Esophagus muscularis mucosa (tissue), 4 donors: ENCODE measurements at regions of chr1 and their contacts with region 1.

Region 1: GRCh38 chr1:91165033-91165654 is 143.3 kb upstream of the ZNF644 start:
- DNase-seq: peak; percentile 93
- H3K4me3 ChIP-seq: no peak overlapping the region
- H3K27ac ChIP-seq: no peak overlapping the region
- H3K4me1 ChIP-seq: peaks cover 0 to 4% (median 2%) of the 10 kb centered on the region in 4 donors
- H3K27me3 ChIP-seq: no peaks in the 10 kb centered on the region
- CTCF ChIP-seq: peak; percentile 81 to 94 (median 90)
- EP300 ChIP-seq: no peak
- POLR2A ChIP-seq: no peak

Region 2: GRCh38 chr1:90579212-90579802 is 585.8 kb before region 1 on chr1:
- intact Hi-C with region 1: loop called (anchors 2 kb)
- DNase-seq: no peak
- H3K4me3 ChIP-seq: no peak overlapping the region
- H3K27ac ChIP-seq: no peak overlapping the region
- H3K4me1 ChIP-seq: no peaks in the 10 kb centered on the region
- H3K27me3 ChIP-seq: peaks cover 0 to 15% (median 0%) of the 10 kb centered on the region in 4 donors
- CTCF ChIP-seq: peak; percentile 36 to 69 (median 59)
- EP300 ChIP-seq: no peak
- POLR2A ChIP-seq: no peak

Region 3: DNA sequence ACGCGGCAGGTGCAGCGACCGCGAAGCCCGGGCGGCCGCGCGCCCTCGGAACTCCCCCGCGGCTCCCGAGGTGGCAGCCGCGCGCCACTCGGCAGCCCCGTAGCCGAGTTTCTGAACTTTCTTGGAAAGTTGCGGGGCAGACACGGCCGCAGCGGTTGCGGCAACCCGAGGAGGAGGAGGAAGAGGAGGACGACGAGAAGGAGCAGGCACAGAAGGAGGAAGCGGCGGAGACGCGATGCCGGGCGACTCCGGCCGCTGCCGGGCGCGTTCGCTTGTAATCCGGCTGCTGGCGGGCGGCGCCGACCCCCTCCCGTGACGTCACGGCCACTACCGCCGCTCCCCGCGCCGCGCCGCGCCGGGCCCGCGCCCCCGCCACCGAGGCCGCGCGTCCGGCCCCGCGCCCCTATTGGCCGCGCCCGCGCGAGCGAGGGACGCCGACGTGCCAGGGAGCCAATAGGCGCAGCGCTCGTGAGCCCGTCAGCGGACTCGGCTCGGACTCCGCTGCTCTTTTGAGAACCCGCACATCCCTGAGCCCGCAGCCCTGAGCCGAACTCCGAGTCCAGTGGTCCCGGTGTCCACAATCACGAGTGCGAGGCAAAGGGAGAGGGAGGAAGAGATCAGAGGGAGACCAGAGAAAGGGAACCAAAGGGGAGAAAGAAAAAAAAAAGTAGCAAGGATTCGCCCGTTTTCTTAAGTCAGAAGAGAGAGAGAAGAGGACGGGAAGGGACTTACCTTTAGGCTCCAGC is 447.3 kb before region 1 on chr1:
- intact Hi-C with region 1: loop called (anchors 10 kb)
- DNase-seq: peak; percentile 78
- H3K4me3 ChIP-seq: peak overlapping the region; percentile 41 to 48 (median 45)
- H3K27ac ChIP-seq: no peak overlapping the region
- H3K4me1 ChIP-seq: peaks cover 26 to 56% (median 41%) of the 10 kb centered on the region in 4 donors
- H3K27me3 ChIP-seq: peaks cover 14 to 100% (median 86%) of the 10 kb centered on the region in 4 donors
- CTCF ChIP-seq: no peak
- EP300 ChIP-seq: no peak
- POLR2A ChIP-seq: no peak

Region 4: GRCh38 chr1:90973897-90974798 is 191.0 kb before region 1 on chr1:
- intact Hi-C with region 1: no loop called
- DNase-seq: no peak
- H3K4me3 ChIP-seq: no peak overlapping the region
- H3K27ac ChIP-seq: peak overlapping the region in 2 of 4 donors; percentile 13 to 14
- H3K4me1 ChIP-seq: peaks cover 9 to 22% (median 20%) of the 10 kb centered on the region in 4 donors
- H3K27me3 ChIP-seq: no peaks in the 10 kb centered on the region
- CTCF ChIP-seq: no peak
- EP300 ChIP-seq: no peak
- POLR2A ChIP-seq: no peak